ENCODE measurements at regions of chr13 and their contacts with region 1.

Region 1: DNA sequence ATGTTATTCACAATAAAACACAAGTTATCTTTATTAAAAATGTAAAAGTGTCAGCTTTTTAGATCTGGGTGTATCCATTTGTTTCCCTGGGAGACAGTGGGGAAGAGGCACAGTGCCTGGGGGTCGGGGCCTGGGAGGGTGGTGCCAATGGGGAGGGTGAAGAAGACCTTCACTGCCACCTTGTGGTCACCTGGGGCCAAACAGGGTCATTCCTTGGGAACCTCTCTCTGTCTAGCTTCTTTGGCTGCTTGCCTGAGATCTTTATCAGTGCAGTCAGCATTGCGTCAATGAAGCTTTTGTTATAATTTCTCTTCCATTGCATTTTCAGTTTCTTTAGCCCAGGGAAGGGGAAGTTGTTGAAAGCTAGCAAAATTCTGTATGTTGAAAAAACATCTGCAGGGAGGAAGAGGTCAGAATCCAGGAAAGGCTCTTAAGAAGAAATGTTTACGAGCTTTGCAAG is 39.1 kb downstream of the PCDH8 start:
- DNase-seq: peak in 7 of 10 donors; percentile 31 to 90 (median 59)

Region 2: DNA sequence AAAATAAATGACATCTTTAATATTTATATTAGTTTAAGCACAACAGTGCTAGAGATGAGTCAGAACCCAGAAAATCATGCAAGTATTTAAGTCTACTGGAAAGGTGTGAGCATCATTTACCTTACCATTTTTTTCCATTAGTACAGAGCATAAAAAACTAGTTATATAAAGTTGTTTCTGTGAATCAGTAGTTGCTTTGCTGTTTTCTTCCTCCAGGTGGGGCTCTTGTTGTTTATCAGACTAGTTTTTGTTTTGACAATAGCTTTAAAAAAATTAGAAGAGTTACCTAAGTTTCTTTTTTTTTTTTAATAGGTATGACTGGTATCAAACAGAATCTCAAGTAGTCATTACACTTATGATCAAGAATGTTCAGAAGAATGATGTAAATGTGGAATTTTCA is 144.0 kb before region 1 on chr13:
- intact Hi-C with region 1: loop called (anchors 5 kb)
- DNase-seq: no peak

Region 3: GRCh38 chr13:52743988-52744387 is 65.4 kb before region 1 on chr13:
- intact Hi-C with region 1: loop called (anchors 2 kb)
- DNase-seq: no peak